ENCODE measurements at regions of chr5 and their contacts with region 1.

Region 1: GRCh38 chr5:77876862-77877502 is 100.8 kb upstream of the TBCA start:
- DNase-seq: no peak
- ATAC-seq: no peak
- H3K4me3 ChIP-seq: no peak overlapping the region
- H3K27ac ChIP-seq: no peak overlapping the region
- H3K4me1 ChIP-seq: peaks cover 19% of the 10 kb centered on the region; the same call in 1 of the 2 replicates
- H3K27me3 ChIP-seq: no peaks in the 10 kb centered on the region
- CTCF ChIP-seq: no peak

Region 2: GRCh38 chr5:77844623-77845323 is 32.2 kb before region 1 on chr5:
- CTCF ChIA-PET with region 1: no interaction called
- POLR2A ChIA-PET with region 1: no interaction called
- intact Hi-C with region 1: no loop called
- DNase-seq: no peak
- ATAC-seq: no peak
- H3K4me3 ChIP-seq: no peak overlapping the region
- H3K27ac ChIP-seq: no peak overlapping the region
- H3K4me1 ChIP-seq: no peaks in the 10 kb centered on the region
- H3K27me3 ChIP-seq: no peaks in the 10 kb centered on the region
- CTCF ChIP-seq: no peak

Region 3: GRCh38 chr5:77952636-77953212 is 75.7 kb after region 1 on chr5:
- CTCF ChIA-PET with region 1: interaction called, 12 read pairs
- POLR2A ChIA-PET with region 1: no interaction called
- intact Hi-C with region 1: loop called (anchors 5 kb)
- DNase-seq: peak; percentile 55
- ATAC-seq: peak; percentile 97
- H3K4me3 ChIP-seq: no peak overlapping the region
- H3K27ac ChIP-seq: no peak overlapping the region
- H3K4me1 ChIP-seq: peaks cover 5% of the 10 kb centered on the region; the same call in 1 of the 2 replicates
- H3K27me3 ChIP-seq: no peaks in the 10 kb centered on the region
- CTCF ChIP-seq: no peak

Region 4: GRCh38 chr5:78253201-78253600 is 376.2 kb after region 1 on chr5:
- CTCF ChIA-PET with region 1: no interaction called
- POLR2A ChIA-PET with region 1: no interaction called
- intact Hi-C with region 1: no loop called
- DNase-seq: no peak
- ATAC-seq: no peak
- H3K4me3 ChIP-seq: no peak overlapping the region
- H3K27ac ChIP-seq: no peak overlapping the region
- H3K4me1 ChIP-seq: no peaks in the 10 kb centered on the region
- H3K27me3 ChIP-seq: no peaks in the 10 kb centered on the region
- CTCF ChIP-seq: no peak

Measured in PC-3 (cell line).